ENCODE measurements at regions of chr6 and their contacts with region 1.

Region 1: GRCh38 chr6:25223490-25223991 is 55.6 kb upstream of the CARMIL1 start:
- DNase-seq: peak; percentile 61
- H3K4me3 ChIP-seq: peak overlapping the region; percentile 51
- H3K27ac ChIP-seq: peak overlapping the region; percentile 29
- H3K4me1 ChIP-seq: peaks cover 39% of the 10 kb centered on the region
- H3K27me3 ChIP-seq: no peaks in the 10 kb centered on the region
- CTCF ChIP-seq: peak; percentile 94

Region 2: GRCh38 chr6:25085756-25086155 is 137.8 kb before region 1 on chr6:
- intact Hi-C with region 1: no loop called
- DNase-seq: no peak
- H3K4me3 ChIP-seq: no peak overlapping the region
- H3K27ac ChIP-seq: peak overlapping the region; percentile 79
- H3K4me1 ChIP-seq: peaks cover 69% of the 10 kb centered on the region
- H3K27me3 ChIP-seq: no peaks in the 10 kb centered on the region
- CTCF ChIP-seq: no peak

Region 3: DNA sequence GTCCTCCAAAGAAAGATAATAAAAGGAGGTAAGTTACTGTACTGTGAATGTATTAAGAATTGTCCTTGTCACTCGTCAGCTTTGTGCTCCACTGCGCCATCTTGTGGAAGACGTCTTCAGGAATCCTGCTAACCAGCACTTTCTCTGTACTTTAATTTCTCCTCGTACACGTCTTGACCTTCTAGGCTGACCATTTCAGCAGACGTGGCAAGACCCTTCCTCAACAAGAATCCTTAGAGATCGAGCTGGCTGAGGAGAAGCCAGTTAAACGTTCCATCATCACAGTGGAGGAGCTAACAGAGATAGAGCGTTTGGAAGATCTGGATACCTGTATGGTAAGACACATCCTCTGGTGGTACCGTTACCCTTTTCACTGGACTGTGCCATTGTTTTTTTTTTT is 333.0 kb after region 1 on chr6:
- intact Hi-C with region 1: loop called (anchors 5 kb)
- DNase-seq: peak; percentile 70
- H3K4me3 ChIP-seq: no peak overlapping the region
- H3K27ac ChIP-seq: no peak overlapping the region
- H3K4me1 ChIP-seq: no peaks in the 10 kb centered on the region
- H3K27me3 ChIP-seq: peaks cover 11% of the 10 kb centered on the region
- CTCF ChIP-seq: peak; percentile 83

Region 4: DNA sequence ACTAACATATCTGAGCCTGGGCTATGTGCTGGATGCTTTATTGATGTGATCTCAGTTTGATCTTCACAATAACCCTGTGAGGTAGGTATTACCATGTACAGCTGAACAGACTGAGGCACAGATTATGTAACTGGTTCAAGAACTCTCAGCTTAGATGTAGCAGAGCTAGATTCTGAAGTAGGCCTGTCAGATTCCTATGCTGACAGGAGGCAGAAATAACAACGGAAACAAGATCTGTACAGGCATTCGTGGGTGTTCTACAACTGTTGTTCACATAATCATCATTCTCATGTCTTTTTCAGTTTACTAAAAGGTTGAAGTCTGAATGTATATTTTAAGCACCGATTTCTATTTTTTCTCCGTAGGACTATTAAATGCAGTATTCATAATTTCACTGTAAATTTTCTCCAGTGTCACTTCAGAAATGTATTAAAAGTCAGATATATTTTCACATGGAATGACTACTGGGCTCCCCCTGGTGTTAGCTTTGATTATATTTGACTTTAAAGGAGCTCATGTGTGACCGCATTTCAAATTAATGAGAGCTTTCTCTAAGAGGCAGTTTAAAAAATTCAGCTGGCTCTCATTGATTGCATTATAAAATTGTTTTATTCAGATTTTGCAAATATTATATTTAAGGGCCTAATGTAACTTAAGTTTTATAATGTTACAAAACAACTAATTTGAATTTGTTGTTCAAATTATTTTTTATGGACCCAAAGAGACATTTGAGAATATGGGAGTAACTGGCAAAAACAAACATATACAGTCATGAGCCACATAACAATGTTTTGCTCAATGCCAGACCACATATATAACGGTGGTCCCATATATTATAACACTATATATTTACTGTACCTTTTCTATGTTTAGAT is 494.6 kb after region 1 on chr6:
- intact Hi-C with region 1: loop called (anchors 10 kb)
- DNase-seq: no peak
- H3K4me3 ChIP-seq: no peak overlapping the region
- H3K27ac ChIP-seq: no peak overlapping the region
- H3K4me1 ChIP-seq: no peaks in the 10 kb centered on the region
- H3K27me3 ChIP-seq: peaks cover 6% of the 10 kb centered on the region
- CTCF ChIP-seq: peak; percentile 65

Region 5: DNA sequence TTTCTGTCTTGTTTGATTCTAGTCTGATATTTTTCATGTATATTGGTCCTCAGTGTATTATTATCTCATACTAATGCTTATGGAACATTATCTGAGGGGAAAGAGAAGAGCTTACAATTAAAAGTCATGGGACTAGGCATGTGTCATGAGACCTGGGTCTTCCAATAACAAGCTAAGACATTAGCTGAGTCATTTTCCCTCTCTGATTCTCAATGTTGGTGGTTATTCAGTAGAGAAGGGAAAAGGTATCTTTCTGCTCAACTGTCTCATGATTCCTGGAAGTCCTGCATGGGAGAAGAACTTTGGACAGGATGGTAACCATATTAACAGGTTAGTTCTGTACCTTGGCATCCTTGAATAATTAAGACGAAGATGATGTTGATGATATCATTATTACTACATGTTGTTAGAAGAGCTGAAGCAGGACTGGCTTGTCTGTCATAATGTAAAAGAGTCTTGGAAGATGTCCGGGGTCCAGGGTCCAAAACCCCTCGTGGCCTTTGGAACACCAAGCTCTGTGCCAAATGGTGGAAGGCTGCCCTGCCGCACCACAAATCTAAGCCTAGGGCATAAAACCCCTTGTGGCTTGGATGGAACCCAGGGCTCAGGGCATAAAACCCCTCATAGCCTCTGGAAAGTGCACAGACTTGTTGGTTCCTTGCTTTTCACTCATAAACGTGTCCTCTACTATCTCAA is 758.2 kb after region 1 on chr6:
- intact Hi-C with region 1: no loop called
- DNase-seq: no peak
- H3K4me3 ChIP-seq: no peak overlapping the region
- H3K27ac ChIP-seq: no peak overlapping the region
- H3K4me1 ChIP-seq: no peaks in the 10 kb centered on the region
- H3K27me3 ChIP-seq: no peaks in the 10 kb centered on the region
- CTCF ChIP-seq: no peak